Activated CD4-positive, alpha-beta T cell treated with anti-CD3 and anti-CD28 coated beads, Interleukin-2, amount 10 ng/mL, durations not matched to agents 24 days and 14 days (primary cell): ENCODE measurements at regions of chr11 and their contacts with region 1.

Region 1: GRCh38 chr11:44538375-44539054 is 26.9 kb upstream of the CD82 start:
- DNase-seq: peak; percentile 93
- H3K4me3 Mint-ChIP-seq: no peak overlapping the region
- H3K27ac Mint-ChIP-seq: no peak overlapping the region
- H3K4me1 Mint-ChIP-seq: peaks cover 4% of the 10 kb centered on the region
- H3K27me3 Mint-ChIP-seq: peaks cover 1% of the 10 kb centered on the region

Region 2: DNA sequence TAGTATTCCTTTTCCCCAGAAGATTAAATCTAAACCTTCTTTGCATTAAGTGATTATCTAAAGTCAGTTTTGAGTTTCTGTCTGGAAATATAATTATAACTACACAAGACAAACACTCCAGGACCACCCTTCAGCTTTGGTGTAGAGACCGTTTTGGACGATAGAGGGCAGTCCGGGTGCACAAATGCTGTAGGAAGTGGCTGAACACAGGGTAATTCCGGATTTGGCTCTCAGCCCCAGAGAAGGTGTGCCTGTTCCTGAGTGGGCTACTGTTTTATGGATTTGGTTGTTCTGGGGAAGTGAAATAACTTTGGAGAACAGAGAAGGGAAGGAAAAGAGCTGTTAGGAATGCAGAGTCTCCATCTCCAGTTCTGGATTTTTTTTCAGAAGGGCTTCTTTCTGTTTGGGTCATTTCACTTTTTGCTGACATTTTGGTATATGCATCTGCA is 428.3 kb before region 1 on chr11:
- intact Hi-C with region 1: loop called (anchors 2 kb)
- DNase-seq: peak; percentile 87
- H3K4me3 Mint-ChIP-seq: no peak overlapping the region
- H3K27ac Mint-ChIP-seq: peak overlapping the region; percentile 39
- H3K4me1 Mint-ChIP-seq: peaks cover 11% of the 10 kb centered on the region
- H3K27me3 Mint-ChIP-seq: no peaks in the 10 kb centered on the region

Region 3: DNA sequence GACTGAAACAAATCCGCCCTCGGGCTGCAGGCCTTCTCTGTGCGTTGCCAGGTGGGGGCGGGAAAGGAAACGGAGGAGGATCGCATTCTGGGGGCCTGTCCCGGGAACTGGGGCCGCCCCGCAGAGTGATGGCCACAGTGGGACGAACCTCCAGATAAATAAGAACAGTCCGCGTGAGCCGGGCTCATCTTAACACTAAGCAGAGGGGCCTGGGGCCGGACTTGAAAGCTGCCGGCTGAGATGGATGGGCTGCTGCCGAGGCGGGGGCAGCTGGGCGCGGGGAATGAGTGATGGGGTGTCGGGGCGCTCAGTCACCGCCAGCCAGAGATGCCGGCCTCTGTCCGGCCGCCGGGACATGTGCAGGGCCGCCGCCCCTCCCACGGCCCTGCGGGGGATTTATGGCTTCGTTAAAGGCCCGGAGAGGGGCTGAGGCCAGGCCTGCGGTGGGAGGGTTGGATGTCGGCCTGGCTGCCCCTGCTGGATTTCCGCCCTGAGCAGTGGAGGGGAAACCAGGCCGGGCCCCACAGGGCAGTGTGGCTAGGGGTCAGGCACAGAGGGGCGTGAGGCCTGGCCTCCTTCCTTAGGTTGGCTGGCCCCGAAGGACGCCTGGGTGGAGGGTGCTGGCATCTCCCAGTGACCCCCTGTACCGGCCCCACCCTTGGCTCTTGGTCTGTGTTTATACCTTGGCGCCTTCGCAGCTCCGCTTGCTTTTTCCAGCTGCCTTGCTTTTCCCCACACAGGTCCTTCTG is 18.4 kb before region 1 on chr11:
- intact Hi-C with region 1: loop called (anchors 1 kb)
- DNase-seq: no peak
- H3K4me3 Mint-ChIP-seq: no peak overlapping the region
- H3K27ac Mint-ChIP-seq: no peak overlapping the region
- H3K4me1 Mint-ChIP-seq: peaks cover 6% of the 10 kb centered on the region
- H3K27me3 Mint-ChIP-seq: peaks cover 34% of the 10 kb centered on the region